Right ventricle myocardium inferior (tissue), 1 donor: ENCODE measurements at regions of chr1 and their contacts with region 1.

Region 1: DNA sequence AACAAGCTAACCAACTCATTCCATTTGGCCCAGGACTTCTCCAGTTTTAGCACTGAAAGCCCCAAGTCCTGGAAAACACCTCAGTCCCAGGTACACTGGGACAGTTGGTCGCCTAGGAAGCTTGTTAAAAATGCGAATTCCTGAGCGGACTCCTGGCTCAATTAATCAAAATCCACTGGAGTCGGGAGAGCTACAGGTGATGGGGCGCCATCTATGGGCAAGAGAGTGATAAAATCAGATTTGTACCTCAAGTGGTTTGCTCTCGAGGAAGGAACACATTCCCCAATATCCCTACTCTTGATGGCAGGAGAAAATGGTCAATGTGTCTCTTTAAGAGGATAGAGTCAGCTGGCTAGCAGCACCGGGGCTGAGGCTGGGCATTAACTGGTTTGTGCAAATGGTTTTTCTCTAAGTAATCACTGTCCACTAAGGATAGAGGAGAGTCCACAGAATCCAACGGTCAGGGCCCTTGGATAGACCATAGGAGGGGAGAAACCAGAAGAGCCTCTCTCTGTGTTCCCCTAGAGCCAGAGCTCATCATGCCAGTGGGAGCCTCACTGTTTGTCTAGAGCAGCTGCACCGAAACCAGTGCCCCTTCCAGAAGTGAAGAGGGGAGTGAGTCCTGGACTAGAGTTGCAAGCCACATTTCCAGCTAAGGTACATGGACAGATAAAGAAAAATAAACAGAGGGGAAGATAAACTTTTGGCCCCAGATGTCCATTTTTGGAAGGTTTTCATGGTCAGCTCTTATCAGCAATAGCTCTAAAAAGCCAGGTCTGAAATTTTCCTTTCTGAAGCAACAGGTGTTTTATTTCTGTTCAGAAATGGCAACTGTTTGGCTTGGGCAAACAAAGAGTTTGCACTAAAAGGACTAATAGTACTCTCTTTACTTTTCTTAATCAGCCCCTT is 148.5 kb downstream of the TENT5C start:
- DNase-seq: peak; percentile 60
- ATAC-seq: no peak

Region 2: DNA sequence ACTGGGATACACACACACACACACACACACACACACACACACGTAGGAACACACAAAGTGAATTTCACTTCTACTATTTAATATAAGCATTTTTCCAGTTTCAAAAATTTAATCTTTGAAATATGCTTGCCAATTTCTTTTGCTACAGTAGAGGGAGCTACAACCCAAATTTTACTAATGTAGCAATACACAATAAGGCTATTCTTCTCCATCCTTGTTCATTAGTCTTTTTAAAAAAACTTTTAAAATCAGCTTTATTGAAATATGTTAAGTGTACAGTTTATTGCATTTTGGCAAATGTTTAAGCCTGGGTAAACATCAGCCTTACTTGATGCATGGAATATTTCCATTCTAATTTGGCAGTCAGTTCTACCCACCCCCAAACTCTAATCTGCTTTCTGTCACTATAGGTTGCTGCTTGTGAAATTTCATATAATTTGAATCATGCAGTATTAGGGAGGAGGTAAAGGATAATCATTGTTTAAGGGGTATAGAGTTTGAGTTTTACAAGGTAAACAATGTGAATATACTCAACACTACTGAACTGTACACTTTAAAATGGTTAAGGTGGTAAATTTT is 241.5 kb before region 1 on chr1:
- intact Hi-C with region 1: loop called (anchors 2 kb)
- DNase-seq: no peak
- ATAC-seq: no peak

Region 3: GRCh38 chr1:117534995-117535467 is 219.3 kb before region 1 on chr1:
- intact Hi-C with region 1: loop called (anchors 1 kb)
- DNase-seq: no peak
- ATAC-seq: peak; percentile 84

Region 4: DNA sequence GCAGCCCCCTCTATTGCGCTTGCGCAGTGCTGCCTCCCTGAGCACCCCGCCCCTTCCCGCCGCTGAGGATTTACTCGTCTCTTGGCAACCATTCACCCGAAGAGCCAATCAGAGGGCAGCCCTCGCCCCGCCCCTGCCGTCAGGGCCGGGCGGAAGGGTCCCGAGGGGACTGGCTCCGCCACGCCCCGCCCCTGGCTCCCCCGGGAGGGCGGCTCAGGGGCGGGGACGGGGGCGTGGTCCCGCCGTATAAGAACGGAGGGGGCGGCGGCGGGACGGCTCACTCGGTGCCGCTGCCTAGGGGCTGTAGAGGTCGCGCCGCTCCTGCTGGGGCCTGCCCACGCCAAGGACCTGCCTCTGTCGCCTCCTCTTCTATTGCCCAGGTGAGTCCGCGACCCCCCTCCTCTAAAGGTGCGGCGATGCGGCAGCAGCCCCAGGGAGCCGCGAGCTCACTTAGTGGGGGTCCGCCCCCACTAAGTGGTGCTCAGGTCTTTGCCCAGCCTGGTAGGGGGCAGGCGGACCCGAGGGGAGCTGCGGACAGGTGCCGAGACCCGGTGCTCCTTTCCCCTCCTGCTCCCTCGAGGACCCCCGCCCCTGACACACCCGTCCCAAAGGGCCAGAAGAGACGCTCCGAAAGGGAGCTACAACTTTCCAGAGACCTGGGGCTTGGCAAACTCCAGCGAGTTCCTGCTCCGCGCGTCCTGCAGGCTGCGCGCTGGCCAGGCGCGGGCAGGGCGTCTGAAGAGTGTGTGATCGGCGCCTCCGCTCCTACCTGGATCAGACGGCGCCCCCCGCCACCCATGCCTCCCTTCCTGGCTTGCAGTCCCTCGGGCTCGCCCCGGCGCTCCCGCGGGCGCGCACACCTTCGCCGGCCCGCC is 148.3 kb before region 1 on chr1 and contains the start of gene TENT5C:
- intact Hi-C with region 1: loop called (anchors 5 kb)
- DNase-seq: peak; percentile 99
- ATAC-seq: peak; percentile 97
- total RNA-seq, gene TENT5C: 18.7 TPM

Region 5: DNA sequence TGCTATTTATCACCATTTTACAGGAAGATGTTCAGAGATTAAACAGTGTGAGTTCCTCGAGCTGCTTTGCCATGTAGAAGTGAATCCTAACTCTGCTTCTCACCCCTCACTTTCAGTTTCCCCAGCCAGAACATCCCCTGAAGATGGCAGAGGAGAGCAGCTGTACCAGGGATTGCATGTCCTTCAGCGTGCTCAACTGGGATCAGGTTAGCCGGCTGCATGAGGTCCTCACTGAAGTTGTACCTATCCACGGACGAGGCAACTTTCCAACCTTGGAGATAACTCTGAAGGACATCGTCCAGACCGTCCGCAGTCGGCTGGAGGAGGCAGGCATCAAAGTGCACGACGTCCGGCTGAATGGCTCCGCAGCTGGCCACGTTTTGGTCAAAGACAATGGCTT is 131.6 kb before region 1 on chr1:
- intact Hi-C with region 1: loop called (anchors 5 kb)
- DNase-seq: no peak
- ATAC-seq: no peak

Region 6: GRCh38 chr1:117674521-117675397 is 79.6 kb before region 1 on chr1:
- intact Hi-C with region 1: loop called (anchors 5 kb)
- DNase-seq: no peak
- ATAC-seq: no peak